MCF 10A (cell line): ENCODE measurements at regions of chr12 and their contacts with region 1.

Region 1: GRCh38 chr12:6965026-6965661 is 5.3 kb downstream of the PHB2 start:
- DNase-seq: peak; percentile 92
- H3K4me3 Mint-ChIP-seq: peak overlapping the region; percentile 87
- H3K27ac Mint-ChIP-seq: peak overlapping the region; percentile 94
- H3K4me1 Mint-ChIP-seq: peaks cover 63% of the 10 kb centered on the region
- H3K27me3 Mint-ChIP-seq: no peaks in the 10 kb centered on the region
- CTCF ChIP-seq: peak; percentile 82

Region 2: DNA sequence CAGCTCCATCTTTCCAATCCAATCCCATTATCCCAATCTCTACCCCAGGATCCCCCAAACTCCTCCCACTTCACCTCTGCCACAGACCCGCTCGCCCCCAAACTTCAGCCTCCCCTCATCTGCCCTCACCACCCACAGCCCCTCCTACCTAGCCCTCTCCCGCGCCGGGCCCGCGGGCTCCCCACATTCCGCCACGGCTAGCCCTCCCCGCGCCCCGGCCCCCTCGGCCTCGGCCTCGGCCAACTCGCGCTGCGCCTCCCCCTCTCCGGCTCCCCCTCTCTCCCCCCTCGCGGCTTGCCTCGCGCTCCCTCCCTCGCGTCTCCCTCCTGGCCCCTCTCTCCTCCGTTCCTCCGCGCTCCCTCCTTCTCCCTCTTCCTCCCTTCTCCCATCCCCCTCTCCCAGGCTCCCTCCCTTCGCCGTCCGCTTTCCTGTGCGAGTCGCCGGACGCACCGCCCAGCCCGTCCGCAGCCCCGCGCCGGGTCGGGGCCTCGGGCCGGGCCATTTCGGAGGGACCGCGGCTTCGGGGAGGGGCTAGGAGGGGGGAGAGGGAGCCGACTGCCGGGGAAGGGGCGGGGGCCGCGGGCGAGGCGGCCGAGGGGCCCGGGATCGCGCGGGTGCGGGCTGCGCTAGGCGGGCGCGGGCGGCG is 37.6 kb before region 1 on chr12 and contains the start of gene ATN1:
- CTCF ChIA-PET with region 1: interaction called, 65 read pairs
- POLR2A ChIA-PET with region 1: interaction called, 113 read pairs
- intact Hi-C with region 1: loop called (anchors 1 kb)
- DNase-seq: peak; percentile 66
- H3K4me3 Mint-ChIP-seq: peak within 1 kb of the TSS; percentile 91
- H3K27ac Mint-ChIP-seq: peak within 1 kb of the TSS; percentile 92
- H3K4me1 Mint-ChIP-seq: peaks cover 69% of the 10 kb centered on the region
- H3K27me3 Mint-ChIP-seq: no peaks in the 10 kb centered on the region
- CTCF ChIP-seq: no peak
- total RNA-seq, gene ATN1: 83.7 and 84.7 TPM in 2 replicates

Region 3: DNA sequence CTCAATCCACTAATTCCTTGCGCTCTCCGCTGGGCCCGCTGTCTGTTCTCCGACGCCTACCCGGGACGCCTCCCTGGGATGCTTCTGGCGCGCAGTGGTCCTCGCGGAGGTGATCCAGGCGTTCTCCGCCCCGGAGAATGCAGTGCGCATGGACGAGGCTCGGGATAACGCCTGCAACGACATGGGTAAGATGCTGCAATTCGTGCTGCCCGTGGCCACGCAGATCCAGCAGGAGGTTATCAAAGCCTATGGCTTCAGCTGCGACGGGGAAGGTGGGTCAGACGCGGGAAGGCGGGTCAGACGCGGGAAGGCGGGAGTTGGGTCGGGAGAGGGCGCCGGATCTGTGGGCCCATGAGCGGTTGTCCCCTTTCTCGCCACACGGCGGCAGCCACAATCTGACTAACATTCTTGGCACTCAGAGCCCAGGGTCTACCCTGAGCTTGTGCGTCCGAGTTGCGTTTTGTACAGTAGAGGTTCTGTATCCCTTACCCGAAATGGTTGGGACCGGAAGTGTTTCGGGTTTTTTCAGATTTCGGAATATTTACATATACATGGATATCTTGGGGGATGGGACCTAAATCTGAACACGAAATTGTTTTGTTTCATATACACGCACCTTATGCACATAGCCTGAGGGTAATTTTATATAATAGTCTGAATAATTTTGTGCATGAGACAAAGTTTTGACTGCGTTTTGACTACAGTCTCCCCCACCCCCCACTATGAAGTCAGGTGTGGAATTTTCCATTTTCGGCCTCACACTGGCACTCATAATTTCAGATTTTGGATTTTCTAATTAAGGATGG is 20.6 kb before region 1 on chr12:
- CTCF ChIA-PET with region 1: interaction called, 160 read pairs
- POLR2A ChIA-PET with region 1: interaction called, 495 read pairs
- intact Hi-C with region 1: loop called (anchors 1 kb)
- DNase-seq: peak; percentile 96
- H3K4me3 Mint-ChIP-seq: peak overlapping the region; percentile 85
- H3K27ac Mint-ChIP-seq: peak overlapping the region; percentile 98
- H3K4me1 Mint-ChIP-seq: peaks cover 32% of the 10 kb centered on the region
- H3K27me3 Mint-ChIP-seq: no peaks in the 10 kb centered on the region
- CTCF ChIP-seq: peak; percentile 63

Region 4: GRCh38 chr12:6975297-6976027 is 10.3 kb after region 1 on chr12:
- CTCF ChIA-PET with region 1: interaction called, 11 read pairs
- POLR2A ChIA-PET with region 1: interaction called, 5 read pairs
- intact Hi-C with region 1: no loop called
- DNase-seq: no peak
- H3K4me3 Mint-ChIP-seq: no peak overlapping the region
- H3K27ac Mint-ChIP-seq: no peak overlapping the region
- H3K4me1 Mint-ChIP-seq: peaks cover 16% of the 10 kb centered on the region
- H3K27me3 Mint-ChIP-seq: no peaks in the 10 kb centered on the region
- CTCF ChIP-seq: no peak

Region 5: GRCh38 chr12:7042842-7043241 is 77.7 kb after region 1 on chr12:
- CTCF ChIA-PET with region 1: interaction called, 7 read pairs
- POLR2A ChIA-PET with region 1: interaction called, 4 read pairs
- intact Hi-C with region 1: loop called (anchors 2 kb)
- DNase-seq: peak; percentile 71
- H3K4me3 Mint-ChIP-seq: no peak overlapping the region
- H3K27ac Mint-ChIP-seq: peak overlapping the region; percentile 25
- H3K4me1 Mint-ChIP-seq: peaks cover 23% of the 10 kb centered on the region
- H3K27me3 Mint-ChIP-seq: no peaks in the 10 kb centered on the region
- CTCF ChIP-seq: peak; percentile 34

Region 6: DNA sequence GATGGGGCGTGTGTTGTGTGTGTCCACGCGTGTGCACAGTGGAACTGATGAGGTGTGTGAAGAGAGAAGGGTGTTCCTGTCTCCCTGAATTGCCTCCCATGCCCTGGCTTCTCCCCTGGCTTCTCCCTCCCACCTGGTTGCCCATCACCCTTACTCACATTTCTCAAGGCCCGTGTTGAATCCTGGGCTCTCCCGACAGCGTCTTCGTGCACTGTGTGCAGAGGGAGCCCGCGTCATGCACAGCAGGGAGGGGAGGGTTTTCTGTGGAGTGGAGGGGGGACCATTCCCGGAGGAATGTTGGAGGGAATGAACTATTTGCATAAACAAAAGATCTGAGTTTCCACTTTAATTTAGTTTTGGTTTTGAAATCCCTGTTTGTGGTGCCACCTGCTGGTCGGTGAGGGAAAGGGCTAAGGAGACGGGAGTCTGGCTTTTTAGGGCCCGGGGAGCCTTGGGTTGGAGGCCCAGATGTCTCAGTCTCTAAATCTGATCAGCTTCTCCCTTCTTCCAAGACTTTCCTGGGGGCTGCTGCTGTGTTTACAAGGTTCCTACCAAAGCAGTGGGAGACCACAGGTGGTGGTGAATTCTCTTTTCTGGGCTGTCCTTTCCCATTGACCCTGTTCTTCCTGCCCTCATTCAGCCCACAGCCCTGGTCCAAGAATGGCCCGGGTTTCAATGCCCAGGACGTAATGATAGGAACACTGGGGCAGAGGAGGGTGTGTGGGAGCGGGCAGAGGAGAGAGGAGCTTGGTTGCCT is 127.3 kb after region 1 on chr12 and contains the start of gene C1R:
- CTCF ChIA-PET with region 1: interaction called, 3 read pairs
- POLR2A ChIA-PET with region 1: interaction called, 5 read pairs
- intact Hi-C with region 1: loop called (anchors 5 kb)
- DNase-seq: peak; percentile 88
- H3K4me3 Mint-ChIP-seq: peak within 1 kb of the TSS; percentile 79
- H3K27ac Mint-ChIP-seq: peak within 1 kb of the TSS; percentile 93
- H3K4me1 Mint-ChIP-seq: peaks cover 26% of the 10 kb centered on the region
- H3K27me3 Mint-ChIP-seq: no peaks in the 10 kb centered on the region
- CTCF ChIP-seq: peak; percentile 75
- total RNA-seq, gene C1R: 13.1 and 16.7 TPM in 2 replicates

Region 7: GRCh38 chr12:7134396-7135166 is 169.4 kb after region 1 on chr12:
- CTCF ChIA-PET with region 1: no interaction called
- POLR2A ChIA-PET with region 1: no interaction called
- intact Hi-C with region 1: no loop called
- DNase-seq: no peak
- H3K4me3 Mint-ChIP-seq: no peak overlapping the region
- H3K27ac Mint-ChIP-seq: no peak overlapping the region
- H3K4me1 Mint-ChIP-seq: peaks cover 6% of the 10 kb centered on the region
- H3K27me3 Mint-ChIP-seq: no peaks in the 10 kb centered on the region
- CTCF ChIP-seq: no peak